H1 (cell line): ENCODE measurements at regions of chr1 and their contacts with region 1.

Region 1: GRCh38 chr1:200364091-200364759 is 45.6 kb downstream of the ZNF281 start:
- DNase-seq: peak in 1 of 2 experiments; percentile 25
- H3K4me3 ChIP-seq: peak overlapping the region in 1 of 4 experiments; percentile 48; a peak in 2 of 8 replicates
- H3K27ac ChIP-seq: peak overlapping the region; percentile 83
- H3K4me1 ChIP-seq: peaks cover 4 to 36% (median 23%) of the 10 kb centered on the region in 4 experiments
- H3K27me3 ChIP-seq: no peaks in the 10 kb centered on the region
- CTCF ChIP-seq: no peak
- EP300 ChIP-seq: peak in 1 of 2 experiments; percentile 70; a peak in 1 of 3 replicates
- POLR2A ChIP-seq: no peak
- RAD21 ChIP-seq: no peak

Region 2: GRCh38 chr1:200128944-200129885 is 235.0 kb before region 1 on chr1:
- CTCF ChIA-PET with region 1: no interaction called
- POLR2A ChIA-PET with region 1: no interaction called
- DNase-seq: no peak
- H3K4me3 ChIP-seq: no peak overlapping the region
- H3K27ac ChIP-seq: no peak overlapping the region; the same call in 1 of the 2 replicates
- H3K4me1 ChIP-seq: peaks cover 0 to 9% (median under 1%) of the 10 kb centered on the region in 4 experiments; a peak in 4 of 7 replicates
- H3K27me3 ChIP-seq: no peaks in the 10 kb centered on the region
- CTCF ChIP-seq: no peak
- EP300 ChIP-seq: no peak
- POLR2A ChIP-seq: no peak
- RAD21 ChIP-seq: no peak

Region 3: GRCh38 chr1:200198247-200198646 is 166.0 kb before region 1 on chr1:
- CTCF ChIA-PET with region 1: no interaction called
- POLR2A ChIA-PET with region 1: no interaction called
- DNase-seq: no peak
- H3K4me3 ChIP-seq: no peak overlapping the region
- H3K27ac ChIP-seq: no peak overlapping the region
- H3K4me1 ChIP-seq: no peaks in the 10 kb centered on the region; a peak in 1 of 7 replicates
- H3K27me3 ChIP-seq: no peaks in the 10 kb centered on the region
- CTCF ChIP-seq: no peak; a peak in 1 of 4 replicates
- EP300 ChIP-seq: no peak
- POLR2A ChIP-seq: no peak
- RAD21 ChIP-seq: no peak

Region 4: GRCh38 chr1:200250469-200250868 is 113.8 kb before region 1 on chr1:
- CTCF ChIA-PET with region 1: no interaction called
- POLR2A ChIA-PET with region 1: no interaction called
- DNase-seq: no peak
- H3K4me3 ChIP-seq: no peak overlapping the region
- H3K27ac ChIP-seq: no peak overlapping the region
- H3K4me1 ChIP-seq: peaks cover 0 to 3% (median 0%) of the 10 kb centered on the region in 4 experiments; a peak in 2 of 7 replicates
- H3K27me3 ChIP-seq: no peaks in the 10 kb centered on the region
- CTCF ChIP-seq: no peak
- EP300 ChIP-seq: no peak
- POLR2A ChIP-seq: no peak
- RAD21 ChIP-seq: no peak

Region 5: DNA sequence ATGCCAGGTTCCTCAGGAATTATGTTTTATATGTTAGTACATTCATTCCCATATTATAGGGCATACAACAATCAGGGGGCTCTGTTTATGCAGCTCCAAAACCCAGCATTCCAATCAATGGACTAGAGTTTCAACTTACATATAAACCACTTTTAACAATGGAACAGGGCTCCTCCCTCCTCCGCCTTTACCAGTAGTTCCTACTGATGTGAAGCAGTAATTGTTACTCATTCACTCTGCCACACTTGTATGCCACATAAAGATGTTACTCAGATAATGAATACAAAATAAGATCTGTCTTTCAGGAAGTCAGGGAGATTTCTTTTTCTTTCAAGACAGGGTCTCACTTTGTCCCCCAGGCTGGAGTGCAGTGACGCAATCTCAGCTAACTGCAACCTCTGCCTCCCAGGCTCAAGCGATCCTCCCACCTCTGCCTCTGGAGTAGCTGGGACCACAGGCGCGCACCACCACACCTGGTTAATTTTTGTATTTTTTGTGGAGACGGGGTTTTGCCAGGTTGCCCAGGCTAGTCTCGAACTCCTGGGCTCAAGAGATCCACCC is 28.5 kb after region 1 on chr1:
- CTCF ChIA-PET with region 1: interaction called, 7 read pairs
- POLR2A ChIA-PET with region 1: interaction called, 14 read pairs
- DNase-seq: no peak
- H3K4me3 ChIP-seq: peak overlapping the region in 1 of 4 experiments; percentile 37; a peak in 1 of 8 replicates
- H3K27ac ChIP-seq: no peak overlapping the region; the same call in 1 of the 2 replicates
- H3K4me1 ChIP-seq: peaks cover 10 to 28% (median 17%) of the 10 kb centered on the region in 4 experiments; a peak in 6 of 7 replicates
- H3K27me3 ChIP-seq: no peaks in the 10 kb centered on the region
- CTCF ChIP-seq: no peak
- EP300 ChIP-seq: no peak
- POLR2A ChIP-seq: no peak
- RAD21 ChIP-seq: no peak

Region 6: GRCh38 chr1:200959411-200959921 is 595.2 kb after region 1 on chr1:
- CTCF ChIA-PET with region 1: no interaction called
- POLR2A ChIA-PET with region 1: no interaction called
- DNase-seq: no peak
- H3K4me3 ChIP-seq: no peak overlapping the region
- H3K27ac ChIP-seq: no peak overlapping the region
- H3K4me1 ChIP-seq: peaks cover 0 to 3% (median under 1%) of the 10 kb centered on the region in 4 experiments; a peak in 2 of 7 replicates
- H3K27me3 ChIP-seq: no peaks in the 10 kb centered on the region
- CTCF ChIP-seq: no peak
- EP300 ChIP-seq: no peak
- POLR2A ChIP-seq: no peak
- RAD21 ChIP-seq: peak in 1 of 2 experiments; percentile 2; a peak in 1 of 4 replicates